ENCODE measurements at regions of chr3 and their contacts with region 1.

Region 1: DNA sequence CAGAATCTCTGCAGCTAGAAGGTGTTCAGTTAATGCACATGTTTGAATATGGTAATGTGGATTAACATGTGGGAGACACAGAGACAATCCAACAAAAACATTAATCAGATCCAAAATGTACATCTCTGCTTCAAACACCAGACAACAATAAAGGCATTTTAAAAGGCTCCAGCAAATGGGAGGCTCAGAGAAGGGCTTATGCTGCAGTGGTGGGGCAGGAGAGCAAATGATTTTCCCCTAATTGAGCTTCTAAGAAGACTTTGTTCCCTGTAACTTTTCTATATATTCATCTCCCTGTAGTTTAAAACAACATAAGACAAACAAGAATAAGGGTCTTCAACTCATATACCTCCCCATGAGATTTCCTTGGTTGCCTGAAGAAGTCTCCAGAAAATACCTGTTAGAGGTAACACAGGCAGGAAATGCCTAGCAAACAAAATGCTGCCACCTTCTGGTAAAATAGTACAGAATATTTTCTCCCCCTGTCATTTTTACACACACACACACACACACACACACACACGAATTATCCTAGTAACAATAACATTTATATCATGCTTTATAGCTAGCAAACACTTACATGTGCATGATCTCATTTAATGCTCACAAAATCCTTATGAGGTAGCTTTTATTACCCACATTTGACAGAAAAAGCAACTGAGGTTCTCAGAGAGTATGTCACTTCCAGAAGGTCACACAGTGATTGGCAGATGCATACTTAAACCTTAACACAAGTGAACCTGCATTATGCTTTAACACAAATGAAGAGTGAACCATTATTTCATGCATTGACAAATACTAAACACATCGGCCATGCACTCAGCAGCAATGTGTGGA is 123.4 kb upstream of the MB21D2 start:
- DNase-seq: peak; percentile 62
- H3K4me3 Mint-ChIP-seq: no peak overlapping the region
- H3K27ac Mint-ChIP-seq: no peak overlapping the region
- H3K4me1 Mint-ChIP-seq: no peaks in the 10 kb centered on the region
- H3K27me3 Mint-ChIP-seq: no peaks in the 10 kb centered on the region
- CTCF ChIP-seq: peak; percentile 37

Region 2: GRCh38 chr3:192825657-192826200 is 215.3 kb before region 1 on chr3:
- CTCF ChIA-PET with region 1: interaction called, 489 read pairs
- POLR2A ChIA-PET with region 1: no interaction called
- intact Hi-C with region 1: no loop called
- DNase-seq: peak; percentile 94
- H3K4me3 Mint-ChIP-seq: no peak overlapping the region
- H3K27ac Mint-ChIP-seq: no peak overlapping the region
- H3K4me1 Mint-ChIP-seq: peaks cover 20% of the 10 kb centered on the region
- H3K27me3 Mint-ChIP-seq: no peaks in the 10 kb centered on the region
- CTCF ChIP-seq: no peak

Region 3: DNA sequence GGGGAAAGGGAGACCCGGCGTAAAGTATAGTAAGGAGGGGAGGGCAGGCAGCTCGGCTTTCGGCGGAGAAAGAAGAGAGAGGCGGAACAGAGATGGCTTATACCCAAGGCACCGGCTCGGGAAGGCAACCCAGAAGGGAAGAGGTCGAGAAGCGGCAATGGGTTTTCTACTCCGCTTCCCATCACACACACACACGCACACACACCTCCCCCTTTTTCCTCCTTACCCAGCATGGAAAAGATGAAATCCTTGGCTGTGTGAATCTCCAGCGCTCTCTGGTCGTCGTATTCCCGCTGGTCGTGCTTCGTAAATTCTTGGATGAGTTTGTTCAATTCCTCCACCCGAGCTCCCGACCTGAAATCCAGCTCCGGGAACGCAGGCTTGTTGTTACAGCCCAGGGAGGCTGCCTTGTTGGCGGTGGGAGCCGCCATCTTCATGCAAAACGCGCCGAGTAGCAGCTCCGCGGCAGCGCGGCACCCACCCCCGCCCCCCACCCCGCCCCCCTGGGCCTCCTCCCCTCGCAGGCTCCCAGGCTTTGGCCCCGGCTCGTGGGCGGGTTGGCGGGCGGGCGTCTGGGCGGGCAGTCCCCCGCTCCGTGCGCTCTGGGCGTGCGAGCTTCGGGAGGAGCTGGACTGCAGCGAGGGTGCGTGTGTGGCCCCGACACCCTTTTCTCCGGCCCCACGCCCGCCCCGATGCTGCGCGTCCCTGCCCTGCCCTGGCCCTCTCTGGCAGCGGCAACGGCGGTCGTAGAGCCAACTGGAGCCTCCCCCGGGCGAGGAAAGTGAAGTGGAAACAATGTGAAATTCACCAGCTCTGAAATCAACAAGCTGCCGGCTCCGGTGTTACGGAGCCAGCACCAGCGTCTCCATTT is 123.4 kb before region 1 on chr3 and contains the start of gene MB21D2:
- CTCF ChIA-PET with region 1: interaction called, 16 read pairs
- POLR2A ChIA-PET with region 1: interaction called, 3 read pairs
- intact Hi-C with region 1: loop called (anchors 1 kb)
- DNase-seq: peak; percentile 72
- H3K4me3 Mint-ChIP-seq: peak within 1 kb of the TSS; percentile 85
- H3K27ac Mint-ChIP-seq: peak within 1 kb of the TSS; percentile 35
- H3K4me1 Mint-ChIP-seq: peaks cover 22% of the 10 kb centered on the region
- H3K27me3 Mint-ChIP-seq: no peaks in the 10 kb centered on the region
- CTCF ChIP-seq: no peak
- total RNA-seq, gene MB21D2: 3.6 and 4.4 TPM in 2 replicates

Region 4: GRCh38 chr3:192957441-192958021 is 83.5 kb before region 1 on chr3:
- CTCF ChIA-PET with region 1: interaction called, 10 read pairs
- POLR2A ChIA-PET with region 1: no interaction called
- intact Hi-C with region 1: no loop called
- DNase-seq: peak; percentile 97
- H3K4me3 Mint-ChIP-seq: peak overlapping the region; percentile 49
- H3K27ac Mint-ChIP-seq: peak overlapping the region; percentile 90
- H3K4me1 Mint-ChIP-seq: peaks cover 35% of the 10 kb centered on the region
- H3K27me3 Mint-ChIP-seq: no peaks in the 10 kb centered on the region
- CTCF ChIP-seq: no peak

Region 5: DNA sequence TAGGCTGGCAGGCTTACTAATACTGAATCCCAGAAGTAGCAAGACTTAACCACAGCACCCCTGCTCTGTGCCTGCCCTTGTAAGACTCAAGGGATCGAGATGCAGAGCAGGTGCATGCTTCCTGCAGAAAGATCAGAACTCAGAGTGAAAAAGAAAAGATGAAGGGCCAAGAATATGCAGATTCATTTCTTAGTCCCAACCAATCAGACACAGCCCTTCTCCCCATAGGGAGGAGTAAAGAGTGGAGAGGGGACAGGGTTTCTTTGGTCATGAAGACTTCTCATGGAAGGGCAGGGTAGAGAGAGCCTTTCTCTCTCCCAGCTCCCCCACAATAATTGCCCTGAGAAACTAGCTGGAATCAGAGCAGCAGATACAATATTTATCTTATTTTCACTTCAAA is 17.8 kb before region 1 on chr3:
- CTCF ChIA-PET with region 1: interaction called, 18 read pairs
- POLR2A ChIA-PET with region 1: no interaction called
- intact Hi-C with region 1: no loop called
- DNase-seq: no peak
- H3K4me3 Mint-ChIP-seq: no peak overlapping the region
- H3K27ac Mint-ChIP-seq: no peak overlapping the region
- H3K4me1 Mint-ChIP-seq: no peaks in the 10 kb centered on the region
- H3K27me3 Mint-ChIP-seq: no peaks in the 10 kb centered on the region
- CTCF ChIP-seq: no peak

Region 6: DNA sequence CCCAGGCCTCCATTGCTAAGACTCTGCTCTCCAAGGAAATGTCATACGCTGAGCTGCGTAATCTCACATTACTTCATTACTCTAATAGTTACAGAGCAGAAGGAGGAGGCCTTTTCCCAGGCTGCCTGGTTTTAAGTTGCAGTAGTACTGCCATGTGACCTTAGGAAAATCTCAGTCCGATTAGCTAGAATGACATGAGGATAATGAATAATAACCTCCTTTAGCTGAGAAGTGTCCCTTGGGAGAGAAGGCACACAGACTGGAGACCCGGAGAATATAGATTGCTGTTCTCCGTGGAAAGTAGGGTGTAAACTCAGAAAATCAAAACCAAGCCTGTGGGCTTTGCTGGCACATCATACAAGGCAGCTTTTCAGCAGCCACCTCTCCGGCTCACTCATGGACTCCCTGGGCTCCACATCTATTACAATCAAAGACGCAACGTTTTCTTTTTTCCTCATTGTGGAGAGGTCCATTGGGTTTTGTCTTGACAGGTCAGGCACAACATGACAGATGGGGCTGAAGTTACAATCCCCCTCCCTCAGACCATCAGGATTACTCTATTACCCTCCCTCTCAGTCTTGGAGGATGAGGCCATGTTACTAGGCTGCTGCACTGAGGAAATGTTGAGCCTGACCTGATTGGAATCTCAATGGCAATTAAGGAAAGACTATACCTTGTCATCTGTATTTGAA is 11.4 kb after region 1 on chr3:
- CTCF ChIA-PET with region 1: interaction called, 23 read pairs
- POLR2A ChIA-PET with region 1: no interaction called
- intact Hi-C with region 1: no loop called
- DNase-seq: no peak
- H3K4me3 Mint-ChIP-seq: no peak overlapping the region
- H3K27ac Mint-ChIP-seq: no peak overlapping the region
- H3K4me1 Mint-ChIP-seq: no peaks in the 10 kb centered on the region
- H3K27me3 Mint-ChIP-seq: peaks cover 79% of the 10 kb centered on the region
- CTCF ChIP-seq: no peak